ENCODE measurements at regions of chr5 and their contacts with region 1.

Region 1: GRCh38 chr5:103582364-103582763 is 19.8 kb upstream of the NUDT12 start:
- DNase-seq: peak; percentile 53
- ATAC-seq: peak; percentile 70
- H3K4me3 ChIP-seq: no peak overlapping the region
- H3K27ac ChIP-seq: no peak overlapping the region
- H3K4me1 ChIP-seq: no peaks in the 10 kb centered on the region
- H3K27me3 ChIP-seq: no peaks in the 10 kb centered on the region
- CTCF ChIP-seq: peak; percentile 37 to 68 (median 47); a peak in 5 of 6 replicates
- POLR2A ChIP-seq: no peak
- RAD21 ChIP-seq: peak; percentile 73

Region 2: GRCh38 chr5:103605277-103605676 is 22.9 kb after region 1 on chr5:
- CTCF ChIA-PET with region 1: no interaction called
- POLR2A ChIA-PET with region 1: no interaction called
- RAD21 ChIA-PET with region 1: no interaction called
- intact Hi-C with region 1: no loop called
- DNase-seq: no peak
- ATAC-seq: no peak
- H3K4me3 ChIP-seq: no peak overlapping the region
- H3K27ac ChIP-seq: no peak overlapping the region
- H3K4me1 ChIP-seq: no peaks in the 10 kb centered on the region
- H3K27me3 ChIP-seq: no peaks in the 10 kb centered on the region
- CTCF ChIP-seq: no peak
- POLR2A ChIP-seq: no peak
- RAD21 ChIP-seq: no peak

Region 3: DNA sequence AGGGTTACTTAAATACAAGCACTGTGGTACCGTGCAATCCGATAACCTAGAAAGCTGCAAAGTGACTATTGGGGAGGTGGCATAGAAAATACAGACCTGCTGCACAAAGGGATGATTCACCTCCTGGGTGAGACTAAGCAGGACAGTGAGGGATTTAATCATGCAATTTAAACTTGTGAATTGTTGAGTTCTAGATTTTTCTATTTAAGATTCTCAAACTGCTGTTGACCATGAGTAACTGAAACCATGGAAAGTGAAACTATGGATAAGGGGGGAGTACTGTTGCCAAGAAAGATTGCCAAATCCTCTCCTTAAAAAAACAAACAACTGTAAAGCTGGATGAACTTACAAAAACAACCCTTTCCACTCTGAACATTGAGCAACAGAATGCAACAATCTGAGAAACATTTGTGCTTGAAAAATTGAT is 41.7 kb after region 1 on chr5:
- CTCF ChIA-PET with region 1: no interaction called
- POLR2A ChIA-PET with region 1: no interaction called
- RAD21 ChIA-PET with region 1: no interaction called
- intact Hi-C with region 1: no loop called
- DNase-seq: no peak
- ATAC-seq: no peak
- H3K4me3 ChIP-seq: no peak overlapping the region
- H3K27ac ChIP-seq: no peak overlapping the region
- H3K4me1 ChIP-seq: no peaks in the 10 kb centered on the region
- H3K27me3 ChIP-seq: no peaks in the 10 kb centered on the region
- CTCF ChIP-seq: no peak
- POLR2A ChIP-seq: no peak
- RAD21 ChIP-seq: no peak

Region 4: GRCh38 chr5:103706939-103707682 is 124.7 kb after region 1 on chr5:
- CTCF ChIA-PET with region 1: no interaction called
- POLR2A ChIA-PET with region 1: no interaction called
- RAD21 ChIA-PET with region 1: no interaction called
- intact Hi-C with region 1: no loop called
- DNase-seq: no peak
- ATAC-seq: no peak
- H3K4me3 ChIP-seq: no peak overlapping the region
- H3K27ac ChIP-seq: no peak overlapping the region
- H3K4me1 ChIP-seq: no peaks in the 10 kb centered on the region
- H3K27me3 ChIP-seq: no peaks in the 10 kb centered on the region
- CTCF ChIP-seq: no peak
- POLR2A ChIP-seq: no peak
- RAD21 ChIP-seq: no peak

Region 5: DNA sequence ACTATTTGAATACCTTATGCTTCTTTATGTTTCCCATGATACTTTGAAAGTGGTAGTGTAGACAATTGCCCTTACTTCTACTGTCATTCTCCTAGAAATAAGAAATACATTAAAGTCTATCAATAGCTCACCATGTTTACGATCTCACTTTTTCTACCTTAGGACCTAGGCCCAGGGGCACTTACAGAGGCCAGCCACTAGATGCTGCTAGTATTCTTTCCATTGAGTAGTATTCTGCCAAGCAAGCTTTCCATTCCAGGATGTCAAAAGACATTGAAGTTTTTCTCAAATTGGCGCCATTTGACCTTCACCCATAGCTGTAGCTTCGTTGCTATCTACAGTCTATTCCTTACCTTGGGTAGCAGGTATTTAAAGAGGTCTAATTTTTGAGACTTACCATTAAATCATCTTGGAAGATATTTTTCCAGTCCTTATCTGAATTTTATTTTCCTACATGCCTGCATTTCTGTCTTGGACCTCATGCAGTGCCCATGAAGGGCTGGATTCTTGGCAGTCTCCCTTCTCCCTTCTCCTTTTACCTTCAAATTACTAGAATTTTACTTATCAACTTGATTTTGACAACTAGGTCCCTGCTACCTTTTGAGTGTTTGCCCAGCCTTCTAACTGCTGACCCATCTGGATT is 226.2 kb after region 1 on chr5:
- CTCF ChIA-PET with region 1: interaction called, 27 read pairs
- POLR2A ChIA-PET with region 1: no interaction called
- RAD21 ChIA-PET with region 1: interaction called, 4 read pairs
- intact Hi-C with region 1: loop called (anchors 2 kb)
- DNase-seq: peak; percentile 61
- ATAC-seq: peak; percentile 99
- H3K4me3 ChIP-seq: no peak overlapping the region
- H3K27ac ChIP-seq: no peak overlapping the region
- H3K4me1 ChIP-seq: peaks cover 0 to 5% of the 10 kb centered on the region in 2 experiments; a peak in 2 of 4 replicates
- H3K27me3 ChIP-seq: no peaks in the 10 kb centered on the region
- CTCF ChIP-seq: peak; percentile 59 to 99 (median 98); a peak in 5 of 6 replicates
- POLR2A ChIP-seq: no peak
- RAD21 ChIP-seq: peak; percentile 96